HepG2 (cell line): ENCODE measurements at regions of chr12 and their contacts with region 1.

Region 1: GRCh38 chr12:57452937-57453509 is 2.1 kb upstream of the INHBE start:
- DNase-seq: peak; percentile 73
- ATAC-seq: peak; percentile 29
- H3K4me3 ChIP-seq: 0 out of 6 replicates have a peak overlapping the region, but pooled peaks of 1 of the 3 experiments have one; percentile 3
- H3K27ac ChIP-seq: no peak overlapping the region
- H3K4me1 ChIP-seq: peaks cover 81% of the 10 kb centered on the region
- H3K27me3 ChIP-seq: no peaks in the 10 kb centered on the region; a peak in 1 of 5 replicates
- CTCF ChIP-seq: peak; percentile 98
- EP300 ChIP-seq: peak in 1 of 2 experiments; percentile 5; a peak in 1 of 4 replicates
- POLR2A ChIP-seq: no peak
- RAD21 ChIP-seq: peak; percentile 91

Region 2: GRCh38 chr12:57229634-57230380 is 223.2 kb before region 1 on chr12 and contains the start of gene SHMT2:
- CTCF ChIA-PET with region 1: no interaction called
- POLR2A ChIA-PET with region 1: interaction called, 11 read pairs
- in situ Hi-C with region 1: no loop called
- intact Hi-C with region 1: no loop called
- DNase-seq: peak; percentile 95
- ATAC-seq: peak; percentile 73
- H3K4me3 ChIP-seq: peak within 1 kb of the TSS; percentile 71 to 82 (median 75)
- H3K27ac ChIP-seq: peak within 1 kb of the TSS; percentile 95
- H3K4me1 ChIP-seq: peaks cover 81% of the 10 kb centered on the region
- H3K27me3 ChIP-seq: peaks cover 0 to 21% of the 10 kb centered on the region in 2 experiments; a peak in 4 of 5 replicates
- CTCF ChIP-seq: no peak; the same call in 1 of the 2 replicates
- EP300 ChIP-seq: no peak
- POLR2A ChIP-seq: peak in 1 of 2 experiments; percentile 68; a peak in 2 of 4 replicates
- RAD21 ChIP-seq: no peak
- total RNA-seq, gene SHMT2: 181 and 184 TPM in 2 replicates

Region 3: GRCh38 chr12:57261428-57261865 is 191.6 kb before region 1 on chr12:
- CTCF ChIA-PET with region 1: interaction called, 3 read pairs
- POLR2A ChIA-PET with region 1: no interaction called
- in situ Hi-C with region 1: loop called (anchors 5 kb)
- intact Hi-C with region 1: loop called (anchors 5 kb)
- DNase-seq: no peak
- ATAC-seq: no peak
- H3K4me3 ChIP-seq: no peak overlapping the region
- H3K27ac ChIP-seq: no peak overlapping the region
- H3K4me1 ChIP-seq: peaks cover 13% of the 10 kb centered on the region
- H3K27me3 ChIP-seq: no peaks in the 10 kb centered on the region
- CTCF ChIP-seq: no peak
- EP300 ChIP-seq: no peak
- POLR2A ChIP-seq: no peak
- RAD21 ChIP-seq: no peak

Region 4: DNA sequence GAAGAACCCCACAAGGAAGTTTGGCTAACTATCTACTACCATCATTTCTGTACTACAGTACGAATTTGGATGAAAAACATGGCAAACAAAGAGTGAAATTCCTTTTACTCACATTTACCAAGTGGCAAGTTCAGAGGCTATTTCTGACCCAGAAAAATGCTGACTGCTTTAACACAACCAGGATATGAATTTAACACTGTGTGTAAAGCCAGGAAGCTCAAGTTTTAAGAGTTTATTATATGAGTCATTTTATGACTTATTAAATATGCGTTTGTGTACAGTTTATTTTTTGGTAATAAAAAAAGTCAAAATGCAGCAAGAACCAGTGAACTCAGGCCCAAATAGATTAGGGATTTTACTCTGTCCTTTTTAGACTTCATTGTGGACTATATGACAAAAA is 143.6 kb before region 1 on chr12:
- CTCF ChIA-PET with region 1: interaction called, 66 read pairs
- POLR2A ChIA-PET with region 1: interaction called, 19 read pairs
- in situ Hi-C with region 1: loop called (anchors 5 kb)
- intact Hi-C with region 1: loop called (anchors 1 kb)
- DNase-seq: no peak
- ATAC-seq: no peak
- H3K4me3 ChIP-seq: no peak overlapping the region
- H3K27ac ChIP-seq: no peak overlapping the region
- H3K4me1 ChIP-seq: no peaks in the 10 kb centered on the region
- H3K27me3 ChIP-seq: no peaks in the 10 kb centered on the region
- CTCF ChIP-seq: no peak
- EP300 ChIP-seq: no peak
- POLR2A ChIP-seq: no peak
- RAD21 ChIP-seq: no peak

Region 5: GRCh38 chr12:57368349-57369095 is 84.5 kb before region 1 on chr12:
- CTCF ChIA-PET with region 1: interaction called, 4 read pairs
- POLR2A ChIA-PET with region 1: interaction called, 9 read pairs
- in situ Hi-C with region 1: no loop called
- intact Hi-C with region 1: loop called (anchors 1 kb)
- DNase-seq: peak; percentile 90
- ATAC-seq: peak; percentile 93
- H3K4me3 ChIP-seq: peak overlapping the region; percentile 0 to 35 (median 29); a peak in 2 of 6 replicates
- H3K27ac ChIP-seq: peak overlapping the region; percentile 69
- H3K4me1 ChIP-seq: peaks cover 43% of the 10 kb centered on the region
- H3K27me3 ChIP-seq: no peaks in the 10 kb centered on the region
- CTCF ChIP-seq: peak; percentile 57
- EP300 ChIP-seq: peak in 1 of 2 experiments; percentile 12; a peak in 1 of 4 replicates
- POLR2A ChIP-seq: no peak
- RAD21 ChIP-seq: no peak

Region 6: DNA sequence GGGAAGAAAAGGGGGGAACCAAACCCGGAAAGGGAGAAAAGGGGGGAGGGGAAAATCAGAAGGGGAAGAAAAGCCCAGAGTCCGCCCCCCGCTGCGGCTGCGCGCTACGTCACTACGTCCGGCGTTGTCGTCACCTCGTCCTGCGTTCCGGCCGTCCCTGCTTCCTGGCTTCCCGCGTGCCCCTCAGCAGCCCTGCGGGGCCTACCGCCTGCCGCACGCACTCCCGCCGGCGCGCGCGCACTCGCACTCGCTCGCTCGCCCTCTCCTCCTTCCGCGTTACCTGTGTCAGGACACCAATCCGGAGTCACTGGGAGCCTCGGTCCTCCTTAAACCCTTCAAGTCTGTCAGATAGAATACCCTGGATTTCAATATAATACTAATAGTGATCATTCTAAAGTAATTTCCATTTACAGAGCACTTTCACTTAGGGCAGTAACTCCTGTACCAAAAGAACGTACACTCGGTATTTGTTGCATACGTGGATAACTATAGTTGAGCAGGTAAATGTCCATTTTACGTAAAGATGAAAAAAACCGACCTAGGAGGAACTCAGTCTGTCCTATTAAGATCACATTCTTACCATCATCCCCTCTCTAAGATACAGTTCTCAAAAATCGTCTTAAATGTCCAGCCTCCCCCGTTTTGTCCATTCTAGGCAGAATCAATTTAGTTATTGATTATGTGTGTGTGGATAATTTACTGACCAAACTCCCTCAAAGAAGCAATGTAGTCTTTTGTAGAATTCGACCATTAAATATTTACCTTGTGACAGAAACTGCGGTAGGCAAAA is 21.9 kb before region 1 on chr12 and contains the start of gene R3HDM2:
- CTCF ChIA-PET with region 1: no interaction called
- POLR2A ChIA-PET with region 1: interaction called, 99 read pairs
- in situ Hi-C with region 1: no loop called
- intact Hi-C with region 1: loop called (anchors 1 kb)
- DNase-seq: peak; percentile 89
- ATAC-seq: peak; percentile 81
- H3K4me3 ChIP-seq: peak within 1 kb of the TSS; percentile 63 to 77 (median 73)
- H3K27ac ChIP-seq: peak within 1 kb of the TSS; percentile 88
- H3K4me1 ChIP-seq: peaks cover 51% of the 10 kb centered on the region
- H3K27me3 ChIP-seq: no peaks in the 10 kb centered on the region; a peak in 1 of 5 replicates
- CTCF ChIP-seq: peak; percentile 10; the same call in 1 of the 2 replicates
- EP300 ChIP-seq: peak in 1 of 2 experiments; percentile 18; a peak in 1 of 4 replicates
- POLR2A ChIP-seq: peak; percentile 79 to 88
- RAD21 ChIP-seq: no peak
- total RNA-seq, gene R3HDM2: 8.3 and 11.1 TPM in 2 replicates